GM18951 (cell line): ENCODE measurements at regions of chr5 and their contacts with region 1.

Region 1: DNA sequence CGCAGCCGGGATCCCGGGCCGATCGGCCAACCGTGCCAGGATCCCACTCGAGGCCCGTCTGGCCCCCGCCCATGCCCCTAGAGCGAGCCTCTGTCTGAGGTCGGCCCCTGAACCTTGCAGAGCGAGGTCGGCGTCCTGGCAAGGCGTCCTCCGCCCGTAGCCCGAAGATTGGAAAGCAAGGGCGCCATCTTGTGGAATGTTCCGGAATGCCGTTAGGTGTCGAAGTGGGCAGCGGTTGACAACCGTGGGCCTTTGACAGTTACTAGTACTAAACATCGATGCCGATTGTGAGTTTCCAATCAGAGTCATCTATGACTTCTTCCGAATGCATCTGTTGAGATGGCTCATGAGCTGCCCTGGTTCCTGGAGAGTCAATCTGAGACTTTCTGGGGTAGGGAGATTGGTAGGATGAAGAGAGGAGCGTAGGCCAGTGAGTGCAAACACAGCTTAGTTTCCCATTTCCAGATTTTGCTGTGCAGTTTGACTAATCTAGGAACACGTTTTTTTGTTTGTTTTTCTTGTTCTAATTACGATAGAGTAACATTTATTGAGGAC is 923 bp upstream of the PLK2 start:
- POLR2A ChIP-seq: no peak

Region 2: GRCh38 chr5:57193757-57194413 is 1266.9 kb before region 1 on chr5:
- in situ Hi-C with region 1: no loop called
- POLR2A ChIP-seq: no peak

Region 3: DNA sequence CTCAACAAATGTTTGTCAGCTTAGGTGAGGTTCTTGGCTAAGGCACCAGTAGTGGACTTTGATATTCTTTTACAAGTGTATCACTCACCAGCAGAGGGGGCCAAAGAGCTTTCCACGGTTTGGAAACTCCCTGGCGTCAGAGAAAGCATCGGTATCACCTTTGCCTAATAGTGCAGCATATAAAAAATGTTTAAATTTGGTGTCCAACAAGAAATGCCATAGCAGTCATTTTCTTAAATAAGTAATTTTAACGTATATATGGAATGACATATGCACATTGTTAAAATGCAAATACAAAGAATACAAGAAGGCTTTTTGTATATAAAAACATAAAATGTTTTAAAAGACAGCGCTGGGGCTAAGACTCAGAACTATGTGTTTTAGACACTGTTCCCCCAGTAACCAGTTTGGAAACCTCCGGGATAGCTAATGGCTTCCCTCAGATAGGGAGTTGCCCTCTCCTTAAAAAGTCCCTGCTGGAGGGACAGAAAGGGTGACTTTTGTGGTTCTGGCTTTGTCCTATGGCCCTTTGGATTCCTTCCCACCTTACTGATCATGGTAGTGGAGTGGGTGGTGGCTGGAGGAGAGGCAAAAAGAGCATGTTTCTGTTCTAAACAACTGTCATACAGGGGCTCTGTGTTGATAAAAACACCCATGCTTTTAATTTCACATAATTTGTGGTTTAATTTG is 1162.4 kb before region 1 on chr5:
- in situ Hi-C with region 1: loop called (anchors 25 kb)
- POLR2A ChIP-seq: no peak

Region 4: GRCh38 chr5:57499262-57500050 is 961.4 kb before region 1 on chr5:
- in situ Hi-C with region 1: loop called (anchors 25 kb)
- POLR2A ChIP-seq: no peak

Region 5: DNA sequence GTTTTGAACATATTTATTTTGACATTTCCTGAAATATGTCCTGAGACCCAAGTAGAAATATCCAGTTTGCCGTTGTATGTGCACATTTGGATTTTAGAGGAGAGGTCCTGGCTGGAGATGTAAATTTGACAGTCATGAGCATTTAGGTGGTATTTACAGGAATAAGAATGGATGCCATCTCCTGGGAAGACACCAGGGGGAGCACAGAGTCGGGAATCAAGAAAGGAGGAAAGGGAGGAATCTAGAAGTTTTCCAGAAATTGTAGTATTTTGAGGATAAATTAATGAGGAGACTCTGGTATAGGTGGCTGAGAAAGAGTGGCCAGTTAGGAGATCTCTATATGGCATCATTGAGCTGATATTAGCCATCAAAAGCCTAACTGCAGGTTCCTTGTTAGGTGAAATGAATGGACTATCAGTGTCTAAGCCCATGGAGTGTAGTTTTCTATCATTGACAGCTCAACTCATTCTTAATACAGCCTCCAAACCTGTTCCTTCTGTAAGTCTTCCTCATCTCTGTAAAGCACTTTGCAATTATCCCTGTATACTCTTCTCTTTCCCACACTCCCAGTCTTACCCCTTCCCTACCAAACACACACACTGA is 37.6 kb after region 1 on chr5:
- in situ Hi-C with region 1: no loop called
- POLR2A ChIP-seq: no peak